Panc1 (cell line): ENCODE measurements at regions of chr21 and their contacts with region 1.

Region 1: DNA sequence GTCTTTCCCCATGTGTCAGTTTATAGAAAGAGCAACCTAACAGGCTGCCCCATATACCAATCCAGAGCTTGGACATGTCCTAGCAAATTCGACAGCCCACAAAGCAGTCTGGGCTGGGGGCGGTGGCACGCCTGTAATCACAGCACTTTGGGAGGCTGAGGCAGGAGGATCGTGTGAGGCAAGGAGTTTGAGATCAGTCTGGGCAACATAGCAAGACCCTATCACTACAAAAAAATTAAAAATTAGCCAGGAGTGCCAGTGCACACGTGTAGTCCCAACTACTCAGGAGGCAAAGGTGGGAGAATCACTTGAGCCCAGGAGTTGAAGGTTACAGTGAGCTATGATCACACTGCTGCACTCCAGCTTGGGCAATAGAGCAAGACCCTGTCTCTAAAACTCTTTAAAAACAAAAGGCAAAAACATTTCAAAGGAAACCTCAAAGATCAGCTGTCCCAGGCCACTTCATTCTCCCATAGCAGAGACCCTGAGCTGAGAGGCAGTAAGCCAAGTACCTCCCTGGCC is 54.4 kb downstream of the SETD4 start:
- DNase-seq: no peak
- ATAC-seq: no peak
- H3K4me3 ChIP-seq: no peak overlapping the region
- H3K27ac ChIP-seq: no peak overlapping the region
- H3K4me1 ChIP-seq: no peaks in the 10 kb centered on the region
- H3K27me3 ChIP-seq: no peaks in the 10 kb centered on the region; the same call in none of the 2 replicates
- CTCF ChIP-seq: no peak

Region 2: GRCh38 chr21:35982717-35983270 is 23.1 kb before region 1 on chr21:
- CTCF ChIA-PET with region 1: no interaction called
- POLR2A ChIA-PET with region 1: interaction called, 15 read pairs
- in situ Hi-C with region 1: no loop called
- intact Hi-C with region 1: no loop called
- DNase-seq: no peak
- ATAC-seq: no peak
- H3K4me3 ChIP-seq: no peak overlapping the region
- H3K27ac ChIP-seq: no peak overlapping the region
- H3K4me1 ChIP-seq: no peaks in the 10 kb centered on the region
- H3K27me3 ChIP-seq: no peaks in the 10 kb centered on the region; the same call in 1 of the 2 replicates
- CTCF ChIP-seq: no peak

Region 3: GRCh38 chr21:36415375-36415774 is 409.4 kb after region 1 on chr21:
- CTCF ChIA-PET with region 1: no interaction called
- POLR2A ChIA-PET with region 1: no interaction called
- in situ Hi-C with region 1: no loop called
- intact Hi-C with region 1: no loop called
- DNase-seq: no peak
- ATAC-seq: no peak
- H3K4me3 ChIP-seq: no peak overlapping the region
- H3K27ac ChIP-seq: no peak overlapping the region
- H3K4me1 ChIP-seq: no peaks in the 10 kb centered on the region
- H3K27me3 ChIP-seq: no peaks in the 10 kb centered on the region
- CTCF ChIP-seq: no peak